Activated B cell treated with CpG ODN at 0.5 μM for 24 hours (primary cell): ENCODE measurements at regions of chr4 and their contacts with region 1.

Region 1: DNA sequence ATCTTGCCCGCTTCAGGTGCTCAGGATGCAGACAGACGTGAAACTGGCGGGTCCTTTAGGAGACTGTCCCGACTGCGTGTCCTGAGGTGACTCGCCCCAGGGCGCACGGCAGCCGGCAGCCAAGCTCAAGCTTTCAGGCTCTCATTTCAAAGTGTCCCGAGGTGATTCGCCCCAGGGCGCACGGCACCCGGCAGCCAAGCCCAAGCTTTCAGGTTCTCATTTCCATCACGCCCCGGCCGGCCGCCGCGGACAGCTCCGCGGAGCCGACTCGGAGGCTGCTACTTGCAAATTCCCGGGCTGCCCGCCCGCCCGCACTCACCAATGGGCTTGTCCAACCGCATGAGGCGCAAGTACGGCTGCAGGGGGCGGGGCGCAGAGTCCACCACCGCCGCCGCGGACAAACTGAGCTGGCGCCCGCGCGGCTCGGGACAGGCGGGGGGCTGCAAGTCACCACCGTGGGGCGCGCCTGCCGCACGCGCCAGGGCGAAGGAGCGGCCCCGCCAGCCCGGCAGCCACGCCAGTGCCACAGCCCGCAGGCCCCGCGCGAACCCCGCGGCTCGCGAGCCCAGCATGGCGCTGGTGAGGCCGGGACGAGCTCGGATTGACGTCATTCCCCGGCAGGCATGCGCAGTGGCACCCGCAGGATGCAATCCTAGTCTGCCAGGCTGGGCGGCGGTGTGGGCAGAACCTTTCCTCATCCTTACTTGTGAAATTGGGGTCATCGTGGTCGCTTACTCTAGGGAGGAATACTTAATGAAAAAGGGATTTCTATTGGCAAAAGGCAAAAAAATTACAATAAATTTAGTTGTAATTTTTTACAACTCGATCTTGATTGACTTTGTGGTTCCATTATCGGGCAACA is at the start of gene COQ2:
- DNase-seq: peak; percentile 96
- ATAC-seq: peak; percentile 89
- H3K4me3 Mint-ChIP-seq: peak within 1 kb of the TSS; percentile 98
- H3K27ac Mint-ChIP-seq: peak within 1 kb of the TSS; percentile 99
- H3K4me1 Mint-ChIP-seq: peaks cover 35% of the 10 kb centered on the region
- H3K27me3 Mint-ChIP-seq: no peaks in the 10 kb centered on the region
- CTCF ChIP-seq: no peak
- total RNA-seq, gene COQ2: 15.2 and 18.8 TPM in 2 replicates

Region 2: DNA sequence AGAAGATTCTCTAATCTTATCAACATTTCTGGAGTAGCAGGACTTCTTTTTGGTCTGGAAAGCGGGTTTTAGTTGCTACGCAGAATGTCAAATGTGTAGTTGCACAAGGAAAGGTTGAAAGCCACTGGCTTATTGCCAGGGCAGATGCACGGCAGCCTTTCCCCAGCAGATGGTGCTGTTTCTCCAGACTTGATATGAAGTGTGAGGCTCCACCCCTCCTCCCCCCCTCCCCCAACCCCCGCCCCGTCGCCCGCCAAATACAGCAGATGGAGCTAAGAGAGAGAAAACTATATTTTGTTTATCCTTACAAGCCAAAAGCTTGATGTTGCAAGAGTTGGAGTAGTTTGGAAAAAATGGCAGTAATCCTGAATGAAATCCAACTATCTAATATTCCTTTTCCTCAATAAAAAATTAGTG is 822.0 kb before region 1 on chr4:
- CTCF ChIA-PET with region 1: no interaction called
- POLR2A ChIA-PET with region 1: no interaction called
- intact Hi-C with region 1: loop called (anchors 5 kb)
- DNase-seq: peak; percentile 66
- ATAC-seq: peak; percentile 99
- H3K4me3 Mint-ChIP-seq: no peak overlapping the region
- H3K27ac Mint-ChIP-seq: no peak overlapping the region
- H3K4me1 Mint-ChIP-seq: peaks cover 22% of the 10 kb centered on the region
- H3K27me3 Mint-ChIP-seq: no peaks in the 10 kb centered on the region
- CTCF ChIP-seq: no peak

Region 3: GRCh38 chr4:82900331-82901128 is 383.9 kb before region 1 on chr4 and contains the start of gene THAP9:
- CTCF ChIA-PET with region 1: interaction called, 4 read pairs
- POLR2A ChIA-PET with region 1: interaction called, 9 read pairs
- intact Hi-C with region 1: loop called (anchors 1 kb)
- DNase-seq: peak; percentile 92
- ATAC-seq: peak; percentile 90
- H3K4me3 Mint-ChIP-seq: no peak within 1 kb of the TSS
- H3K27ac Mint-ChIP-seq: no peak within 1 kb of the TSS
- H3K4me1 Mint-ChIP-seq: peaks cover 20% of the 10 kb centered on the region
- H3K27me3 Mint-ChIP-seq: no peaks in the 10 kb centered on the region
- CTCF ChIP-seq: no peak
- total RNA-seq, gene THAP9: 2.1 and 3.1 TPM in 2 replicates

Region 4: GRCh38 chr4:82948647-82949204 is 335.7 kb before region 1 on chr4:
- CTCF ChIA-PET with region 1: no interaction called
- POLR2A ChIA-PET with region 1: no interaction called
- intact Hi-C with region 1: no loop called
- DNase-seq: no peak
- ATAC-seq: no peak
- H3K4me3 Mint-ChIP-seq: no peak overlapping the region
- H3K27ac Mint-ChIP-seq: no peak overlapping the region
- H3K4me1 Mint-ChIP-seq: no peaks in the 10 kb centered on the region
- H3K27me3 Mint-ChIP-seq: no peaks in the 10 kb centered on the region
- CTCF ChIP-seq: no peak

Region 5: GRCh38 chr4:83074086-83074704 is 210.2 kb before region 1 on chr4:
- CTCF ChIA-PET with region 1: interaction called, 66 read pairs
- POLR2A ChIA-PET with region 1: interaction called, 12 read pairs
- intact Hi-C with region 1: loop called (anchors 1 kb)
- DNase-seq: no peak
- ATAC-seq: peak; percentile 81
- H3K4me3 Mint-ChIP-seq: peak overlapping the region; percentile 53
- H3K27ac Mint-ChIP-seq: peak overlapping the region; percentile 76
- H3K4me1 Mint-ChIP-seq: peaks cover 26% of the 10 kb centered on the region
- H3K27me3 Mint-ChIP-seq: no peaks in the 10 kb centered on the region
- CTCF ChIP-seq: peak; percentile 52

Region 6: GRCh38 chr4:83252782-83253405 is 31.5 kb before region 1 on chr4:
- CTCF ChIA-PET with region 1: interaction called, 8 read pairs
- POLR2A ChIA-PET with region 1: interaction called, 5 read pairs
- intact Hi-C with region 1: loop called (anchors 1 kb)
- DNase-seq: no peak
- ATAC-seq: peak; percentile 73
- H3K4me3 Mint-ChIP-seq: no peak overlapping the region
- H3K27ac Mint-ChIP-seq: peak overlapping the region; percentile 38
- H3K4me1 Mint-ChIP-seq: peaks cover 58% of the 10 kb centered on the region
- H3K27me3 Mint-ChIP-seq: no peaks in the 10 kb centered on the region
- CTCF ChIP-seq: peak; percentile 59

Region 7: DNA sequence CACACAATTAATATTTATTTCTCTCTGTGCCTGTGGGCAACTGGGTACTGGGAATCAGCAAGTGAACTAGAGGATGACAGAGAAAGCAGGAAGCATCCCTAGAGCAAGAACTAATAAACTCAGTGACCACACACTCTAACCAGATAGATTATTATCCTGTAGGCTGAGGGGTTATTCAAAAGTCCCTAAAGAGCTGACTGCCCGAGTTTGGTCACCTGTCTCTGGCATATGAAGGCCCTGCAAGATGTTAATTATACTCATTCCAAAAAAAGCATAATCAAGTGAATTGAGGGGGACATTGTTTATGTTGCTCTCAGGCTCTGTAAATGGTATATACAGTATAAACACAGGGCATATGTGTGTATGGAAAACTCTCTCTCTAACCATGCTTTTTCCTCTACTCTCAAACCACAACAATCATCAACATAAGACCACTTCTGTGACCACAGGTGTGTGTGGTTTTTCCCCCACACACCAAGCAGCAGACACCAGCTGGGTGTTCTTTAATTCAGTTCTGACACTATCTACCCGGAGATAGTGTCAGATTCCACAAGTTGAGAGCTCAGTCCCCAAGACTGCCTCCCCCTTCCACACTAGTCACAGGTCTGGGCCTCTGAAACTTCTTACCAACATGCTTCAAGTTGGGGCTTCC is 56.4 kb after region 1 on chr4:
- CTCF ChIA-PET with region 1: no interaction called
- POLR2A ChIA-PET with region 1: no interaction called
- intact Hi-C with region 1: no loop called
- DNase-seq: no peak
- ATAC-seq: no peak
- H3K4me3 Mint-ChIP-seq: no peak overlapping the region
- H3K27ac Mint-ChIP-seq: no peak overlapping the region
- H3K4me1 Mint-ChIP-seq: no peaks in the 10 kb centered on the region
- H3K27me3 Mint-ChIP-seq: peaks cover 3% of the 10 kb centered on the region
- CTCF ChIP-seq: no peak

Region 8: GRCh38 chr4:83455281-83456129 is 171.1 kb after region 1 on chr4 and contains the starts of genes HELQ and MRPS18C:
- CTCF ChIA-PET with region 1: interaction called, 3 read pairs
- POLR2A ChIA-PET with region 1: interaction called, 20 read pairs
- intact Hi-C with region 1: loop called (anchors 1 kb)
- DNase-seq: peak; percentile 82
- ATAC-seq: peak; percentile 92
- H3K4me3 Mint-ChIP-seq: peak within 1 kb of the TSS; percentile 99
- H3K27ac Mint-ChIP-seq: peak within 1 kb of the TSS; percentile 99
- H3K4me1 Mint-ChIP-seq: peaks cover 55% of the 10 kb centered on the region
- H3K27me3 Mint-ChIP-seq: no peaks in the 10 kb centered on the region
- CTCF ChIP-seq: no peak
- total RNA-seq, gene HELQ: 31.9 and 32.9 TPM in 2 replicates
- total RNA-seq, gene MRPS18C: 56.0 and 56.5 TPM in 2 replicates

Region 9: DNA sequence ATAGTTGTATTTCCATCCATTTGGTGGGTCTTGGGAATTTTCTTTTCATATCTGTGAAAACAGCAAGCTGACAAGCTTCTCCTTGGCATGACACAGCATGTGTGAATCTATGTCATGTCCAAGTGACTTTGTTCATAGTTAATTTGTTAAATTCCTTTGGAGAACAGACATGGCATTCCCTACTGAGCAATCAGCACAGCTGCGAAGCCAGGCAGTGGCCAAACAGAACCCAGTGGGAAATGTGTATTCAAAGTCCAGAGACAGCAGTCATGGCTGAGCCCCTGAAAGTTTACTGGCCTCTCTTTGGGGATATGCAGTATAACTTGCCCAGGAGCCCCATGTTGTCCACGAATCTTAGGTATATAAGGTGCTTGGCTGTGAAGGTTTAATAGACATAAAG is 740.0 kb after region 1 on chr4:
- CTCF ChIA-PET with region 1: no interaction called
- POLR2A ChIA-PET with region 1: no interaction called
- intact Hi-C with region 1: no loop called
- DNase-seq: no peak
- ATAC-seq: no peak
- H3K4me3 Mint-ChIP-seq: no peak overlapping the region
- H3K27ac Mint-ChIP-seq: no peak overlapping the region
- H3K4me1 Mint-ChIP-seq: no peaks in the 10 kb centered on the region
- H3K27me3 Mint-ChIP-seq: no peaks in the 10 kb centered on the region
- CTCF ChIP-seq: no peak